ENCODE measurements at regions of chr5 and their contacts with region 1.

Region 1: GRCh38 chr5:83718195-83718825 is 2.3 kb downstream of the HAPLN1 start:
- DNase-seq: peak; percentile 17
- H3K4me3 ChIP-seq: no peak overlapping the region
- H3K27ac ChIP-seq: no peak overlapping the region
- H3K4me1 ChIP-seq: peaks cover 0 to 24% (median 8%) of the 10 kb centered on the region in 4 donors
- H3K27me3 ChIP-seq: peaks cover 14% of the 10 kb centered on the region
- CTCF ChIP-seq: peak; percentile 74 to 80 (median 78)
- EP300 ChIP-seq: no peak
- POLR2A ChIP-seq: no peak

Region 2: DNA sequence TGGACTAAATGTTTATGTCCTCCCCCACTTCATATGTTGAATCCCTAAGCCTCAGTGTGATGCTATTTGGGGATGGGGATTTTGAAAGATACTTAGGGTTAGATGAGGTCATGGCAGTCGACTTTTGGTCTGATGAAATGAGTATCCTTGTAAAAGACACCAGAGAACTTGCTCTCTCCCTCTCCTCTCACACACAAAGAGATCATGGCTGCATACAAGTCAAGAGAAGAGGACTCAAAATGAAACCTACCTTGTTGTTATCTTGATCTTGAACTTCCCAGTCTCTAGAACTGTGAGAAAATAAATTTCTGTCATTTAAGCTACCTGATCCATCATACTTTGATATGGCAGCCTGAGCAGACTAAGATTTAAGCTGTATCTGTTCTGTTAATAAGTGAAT is 146.3 kb after region 1 on chr5:
- in situ Hi-C with region 1: no loop called
- intact Hi-C with region 1: no loop called
- DNase-seq: no peak
- H3K4me3 ChIP-seq: no peak overlapping the region
- H3K27ac ChIP-seq: no peak overlapping the region
- H3K4me1 ChIP-seq: no peaks in the 10 kb centered on the region
- H3K27me3 ChIP-seq: no peaks in the 10 kb centered on the region
- CTCF ChIP-seq: no peak
- EP300 ChIP-seq: no peak
- POLR2A ChIP-seq: no peak

Region 3: DNA sequence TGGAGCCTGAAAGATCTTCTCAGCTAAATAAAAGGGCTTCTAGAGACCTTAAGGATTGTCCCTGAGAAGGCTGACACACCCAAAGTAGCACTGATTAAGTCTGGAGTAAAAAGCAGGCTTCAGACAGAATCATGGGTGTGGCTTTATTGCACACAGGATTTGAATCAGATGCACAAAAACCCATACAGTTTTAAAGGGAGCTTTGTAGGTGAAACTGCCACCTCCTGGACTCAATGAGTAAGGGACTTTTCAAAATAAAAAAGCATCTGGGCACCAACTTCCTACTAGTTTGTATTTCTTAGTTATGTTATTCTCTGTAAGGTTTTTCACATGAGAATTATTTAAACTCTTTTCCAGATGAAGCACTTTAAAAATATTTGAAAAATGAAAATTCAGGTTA is 537.0 kb after region 1 on chr5:
- in situ Hi-C with region 1: loop called in 2 of 4 experiments (anchors 10 to 25 kb)
- intact Hi-C with region 1: no loop called
- DNase-seq: no peak
- H3K4me3 ChIP-seq: no peak overlapping the region
- H3K27ac ChIP-seq: no peak overlapping the region
- H3K4me1 ChIP-seq: peaks cover 0 to 9% (median 4%) of the 10 kb centered on the region in 4 donors
- H3K27me3 ChIP-seq: no peaks in the 10 kb centered on the region
- CTCF ChIP-seq: peak in 3 of 5 experiments; percentile 15 to 38 (median 36)
- EP300 ChIP-seq: no peak
- POLR2A ChIP-seq: no peak

Region 4: GRCh38 chr5:84274585-84275468 is 556.5 kb after region 1 on chr5:
- in situ Hi-C with region 1: loop called in 1 of 4 experiments (anchors 25 kb)
- intact Hi-C with region 1: no loop called
- DNase-seq: peak; percentile 35
- H3K4me3 ChIP-seq: no peak overlapping the region
- H3K27ac ChIP-seq: no peak overlapping the region
- H3K4me1 ChIP-seq: no peaks in the 10 kb centered on the region
- H3K27me3 ChIP-seq: no peaks in the 10 kb centered on the region
- CTCF ChIP-seq: peak in 4 of 5 experiments; percentile 25 to 51 (median 46)
- EP300 ChIP-seq: no peak
- POLR2A ChIP-seq: no peak

Region 5: DNA sequence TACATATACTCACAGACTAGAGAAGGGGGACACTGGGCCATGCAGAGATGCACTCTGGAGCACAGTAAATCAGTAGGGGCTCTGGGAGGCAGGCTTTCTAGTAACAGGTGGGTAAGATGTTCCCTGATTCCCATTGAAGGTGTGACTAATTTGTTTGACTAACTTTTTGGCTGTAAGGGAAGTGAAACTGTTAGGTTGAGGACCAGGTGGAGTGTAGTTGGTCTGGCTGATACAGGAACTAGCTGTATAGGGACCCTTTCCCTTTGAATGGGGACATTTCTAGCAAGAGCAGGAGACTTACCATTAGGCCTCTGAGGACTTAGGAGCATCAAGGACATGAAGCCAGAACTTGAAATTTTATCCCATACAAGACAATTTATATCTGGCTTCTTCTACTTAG is 1909.8 kb after region 1 on chr5:
- in situ Hi-C with region 1: no loop called
- intact Hi-C with region 1: no loop called
- DNase-seq: no peak
- H3K4me3 ChIP-seq: no peak overlapping the region
- H3K27ac ChIP-seq: no peak overlapping the region
- H3K4me1 ChIP-seq: no peaks in the 10 kb centered on the region
- H3K27me3 ChIP-seq: no peaks in the 10 kb centered on the region
- CTCF ChIP-seq: no peak
- EP300 ChIP-seq: no peak
- POLR2A ChIP-seq: no peak